H1 (cell line): ENCODE measurements at regions of chr3 and their contacts with region 1.

Region 1: GRCh38 chr3:123993818-123994217 is 1.9 kb upstream of the ROPN1 start:
- DNase-seq: no peak
- H3K4me3 ChIP-seq: no peak overlapping the region
- H3K27ac ChIP-seq: no peak overlapping the region
- H3K4me1 ChIP-seq: no peaks in the 10 kb centered on the region
- H3K27me3 ChIP-seq: peaks cover 4 to 27% (median 18%) of the 10 kb centered on the region in 4 experiments
- CTCF ChIP-seq: no peak
- EP300 ChIP-seq: no peak
- POLR2A ChIP-seq: no peak
- RAD21 ChIP-seq: no peak

Region 2: GRCh38 chr3:123980539-123980938 is 13.3 kb before region 1 on chr3:
- CTCF ChIA-PET with region 1: interaction called, 16 read pairs
- POLR2A ChIA-PET with region 1: no interaction called
- DNase-seq: no peak
- H3K4me3 ChIP-seq: peak overlapping the region in 1 of 4 experiments; percentile 56; a peak in 5 of 8 replicates
- H3K27ac ChIP-seq: no peak overlapping the region
- H3K4me1 ChIP-seq: no peaks in the 10 kb centered on the region; a peak in 1 of 7 replicates
- H3K27me3 ChIP-seq: peaks cover 0 to 4% (median 0%) of the 10 kb centered on the region in 4 experiments; a peak in 3 of 7 replicates
- CTCF ChIP-seq: no peak
- EP300 ChIP-seq: no peak
- POLR2A ChIP-seq: no peak
- RAD21 ChIP-seq: no peak